ENCODE measurements at regions of chr4 and their contacts with region 1.

Region 1: DNA sequence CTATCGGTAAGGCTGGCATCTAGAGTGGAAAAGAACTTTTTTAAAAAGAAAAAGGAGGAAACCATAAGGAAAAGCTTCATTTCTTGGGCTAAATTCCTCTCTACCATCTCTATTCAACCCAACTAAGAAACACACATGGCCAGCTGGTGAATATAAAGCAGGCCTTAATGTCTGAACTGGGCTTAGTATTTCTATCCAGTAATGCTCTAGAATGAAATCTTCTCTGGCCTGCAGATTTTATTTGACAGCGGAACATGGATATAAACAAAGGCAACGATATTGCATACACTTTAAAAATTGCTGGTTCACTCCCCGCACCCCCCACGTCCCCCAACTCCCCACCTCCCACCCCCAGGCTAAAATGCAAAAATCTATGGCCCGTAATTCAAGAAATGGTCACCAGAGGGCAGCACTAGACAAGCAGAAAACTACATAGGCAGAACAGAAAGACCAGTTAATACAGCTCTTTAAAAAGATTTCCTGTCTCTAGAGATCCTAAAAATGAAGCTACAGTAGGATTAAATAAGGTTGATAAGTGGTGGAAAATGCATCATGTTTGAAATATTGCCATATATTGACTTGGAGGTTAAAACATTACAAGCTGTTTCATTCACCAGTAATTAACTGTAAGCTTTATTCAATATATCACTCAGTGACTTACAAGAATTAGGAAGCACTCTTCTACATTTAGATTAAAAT is 155.2 kb upstream of the GALNT7 start:
- DNase-seq: peak; percentile 34
- H3K4me3 Mint-ChIP-seq: no peak overlapping the region
- H3K27ac Mint-ChIP-seq: no peak overlapping the region
- H3K4me1 Mint-ChIP-seq: no peaks in the 10 kb centered on the region
- H3K27me3 Mint-ChIP-seq: no peaks in the 10 kb centered on the region
- CTCF ChIP-seq: peak; percentile 24

Region 2: GRCh38 chr4:173257732-173258717 is 244.6 kb after region 1 on chr4:
- CTCF ChIA-PET with region 1: interaction called, 19 read pairs
- intact Hi-C with region 1: loop called (anchors 1 kb)
- DNase-seq: peak; percentile 63
- H3K4me3 Mint-ChIP-seq: no peak overlapping the region
- H3K27ac Mint-ChIP-seq: no peak overlapping the region
- H3K4me1 Mint-ChIP-seq: peaks cover 8% of the 10 kb centered on the region
- H3K27me3 Mint-ChIP-seq: no peaks in the 10 kb centered on the region
- CTCF ChIP-seq: peak; percentile 39